Left lung (tissue), 14 donors: ENCODE measurements at regions of chr3 and their contacts with region 1.

Region 1: DNA sequence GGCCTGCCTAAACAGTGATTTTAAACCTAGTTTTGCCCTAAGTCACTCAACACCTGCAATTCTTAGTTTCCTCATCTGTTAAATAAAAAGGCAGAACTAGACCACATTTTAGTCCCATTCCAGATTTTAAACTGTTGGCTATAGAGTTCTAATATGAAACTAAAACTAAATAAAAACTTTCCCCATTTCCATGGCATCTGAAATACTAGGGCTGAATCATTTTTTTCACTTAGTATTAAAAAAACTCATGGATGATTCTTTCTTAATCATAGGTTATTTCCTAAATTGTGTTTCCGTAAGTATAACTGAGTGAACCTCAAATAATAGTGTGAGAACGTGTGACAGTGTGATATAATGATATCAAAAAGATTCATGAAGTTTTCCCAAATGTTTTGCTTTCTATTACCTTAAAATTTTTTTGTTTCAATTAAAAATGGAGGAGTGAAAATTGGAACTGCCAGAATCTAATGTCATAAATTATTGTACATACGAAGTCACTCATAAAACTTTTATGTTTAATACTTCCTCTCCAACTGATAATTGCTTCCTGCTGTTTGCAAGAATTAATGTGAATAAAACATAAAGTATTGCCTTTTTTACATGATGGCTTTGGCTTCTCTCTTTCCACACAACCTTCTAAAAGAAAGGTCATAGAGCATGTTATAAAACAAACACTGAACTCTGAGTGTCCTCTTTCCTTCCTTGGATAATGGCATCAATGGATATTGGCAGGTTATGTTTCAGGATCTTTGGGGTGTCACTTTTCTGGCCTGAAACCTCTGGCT is 315.1 kb upstream of the MME start:
- DNase-seq: no peak
- ATAC-seq: no peak
- H3K4me3 ChIP-seq: no peak overlapping the region
- H3K27ac ChIP-seq: no peak overlapping the region
- H3K4me1 ChIP-seq: no peaks in the 10 kb centered on the region
- H3K27me3 ChIP-seq: no peaks in the 10 kb centered on the region
- CTCF ChIP-seq: no peak

Region 2: DNA sequence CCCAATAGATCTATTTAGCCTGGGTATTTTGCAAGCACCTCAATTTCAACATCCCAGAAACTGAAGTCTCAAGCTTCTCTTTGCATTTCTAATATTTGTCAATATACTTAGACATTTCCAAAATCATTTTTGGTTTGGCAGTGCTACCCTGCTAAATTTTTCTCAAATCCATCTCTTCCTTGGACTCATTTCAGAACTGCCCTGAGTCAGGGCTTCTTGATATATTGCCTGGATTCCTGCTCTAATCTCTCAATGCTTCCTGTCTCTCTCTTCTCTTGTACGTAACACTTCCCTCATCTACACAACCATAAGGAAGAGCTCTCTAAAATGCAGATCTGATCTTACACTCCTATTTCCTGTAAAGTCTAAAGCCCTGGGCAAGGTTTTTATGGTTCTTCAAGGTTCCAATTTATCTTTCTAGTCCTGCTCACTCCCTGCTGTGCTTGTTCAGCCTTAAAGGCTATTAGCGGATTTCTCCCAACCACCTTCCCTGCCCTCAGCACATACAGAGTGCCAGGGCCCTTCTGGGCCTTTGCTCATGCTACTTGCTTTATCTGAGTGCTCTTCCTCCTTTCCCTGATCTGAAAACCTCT is 262.0 kb after region 1 on chr3:
- intact Hi-C with region 1: no loop called
- DNase-seq: no peak
- ATAC-seq: peak; percentile 37
- H3K4me3 ChIP-seq: no peak overlapping the region
- H3K27ac ChIP-seq: peak overlapping the region in 1 of 2 donors; percentile 79
- H3K4me1 ChIP-seq: peaks cover 0 to 14% of the 10 kb centered on the region in 2 donors
- H3K27me3 ChIP-seq: no peaks in the 10 kb centered on the region
- CTCF ChIP-seq: no peak

Region 3: GRCh38 chr3:155323063-155323666 is 558.1 kb after region 1 on chr3:
- intact Hi-C with region 1: loop called in 1 of 2 experiments (anchors 5 kb)
- DNase-seq: peak in 2 of 4 donors; percentile 64 to 83
- ATAC-seq: peak; percentile 88
- H3K4me3 ChIP-seq: no peak overlapping the region
- H3K27ac ChIP-seq: no peak overlapping the region
- H3K4me1 ChIP-seq: no peaks in the 10 kb centered on the region
- H3K27me3 ChIP-seq: no peaks in the 10 kb centered on the region
- CTCF ChIP-seq: peak; percentile 33 to 51